ENCODE measurements at regions of chr1 and their contacts with region 1.

Region 1: DNA sequence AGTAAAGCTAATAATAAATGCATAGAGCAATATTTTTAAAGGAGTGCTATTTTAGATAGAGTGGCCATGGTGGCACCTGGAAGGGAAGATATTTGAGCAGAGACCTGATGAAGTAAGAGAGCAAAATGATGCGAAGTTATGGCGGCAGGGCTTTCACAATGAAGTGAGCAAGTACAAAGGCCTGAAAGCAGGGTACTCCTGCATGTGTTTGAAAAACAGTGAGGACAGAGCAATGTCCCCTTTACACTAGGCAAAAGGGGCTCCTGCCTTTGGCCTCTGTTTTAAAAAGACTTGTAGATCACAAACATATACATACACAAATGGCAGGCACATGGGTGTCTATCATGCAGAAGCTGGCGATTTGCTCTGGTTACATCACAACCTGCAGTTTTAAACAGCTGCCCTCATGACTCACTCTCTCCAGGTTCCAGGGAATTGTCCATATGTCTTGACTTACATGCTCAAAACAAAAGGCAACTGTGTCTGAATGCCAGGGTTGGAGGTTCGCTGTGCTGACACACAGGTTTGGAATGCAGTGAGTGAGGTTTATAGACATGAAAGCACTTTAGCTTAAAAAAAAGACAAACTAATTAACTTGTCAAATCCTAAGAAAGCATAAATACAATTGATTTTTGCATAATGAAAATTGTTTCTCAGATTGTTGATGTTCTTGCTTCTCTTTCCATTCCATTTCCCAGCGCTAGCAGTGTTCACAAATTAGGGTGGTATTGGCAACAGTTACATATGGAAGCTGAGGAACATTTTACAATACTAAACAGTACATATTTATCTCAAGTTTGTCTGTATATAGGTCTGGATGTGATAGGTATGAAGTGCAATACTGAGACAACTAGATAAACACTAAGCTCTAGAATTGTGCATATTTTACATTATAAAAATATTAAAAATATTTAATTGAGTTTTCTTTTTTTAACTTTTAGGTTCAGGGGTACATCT is 313.9 kb downstream of the BARHL2 start:
- DNase-seq: peak; percentile 98
- ATAC-seq: peak; percentile 96
- H3K4me3 ChIP-seq: peak overlapping the region; percentile 48
- H3K27ac ChIP-seq: peak overlapping the region; percentile 67
- H3K4me1 ChIP-seq: peaks cover 44% of the 10 kb centered on the region
- H3K27me3 ChIP-seq: no peaks in the 10 kb centered on the region
- CTCF ChIP-seq: no peak

Region 2: DNA sequence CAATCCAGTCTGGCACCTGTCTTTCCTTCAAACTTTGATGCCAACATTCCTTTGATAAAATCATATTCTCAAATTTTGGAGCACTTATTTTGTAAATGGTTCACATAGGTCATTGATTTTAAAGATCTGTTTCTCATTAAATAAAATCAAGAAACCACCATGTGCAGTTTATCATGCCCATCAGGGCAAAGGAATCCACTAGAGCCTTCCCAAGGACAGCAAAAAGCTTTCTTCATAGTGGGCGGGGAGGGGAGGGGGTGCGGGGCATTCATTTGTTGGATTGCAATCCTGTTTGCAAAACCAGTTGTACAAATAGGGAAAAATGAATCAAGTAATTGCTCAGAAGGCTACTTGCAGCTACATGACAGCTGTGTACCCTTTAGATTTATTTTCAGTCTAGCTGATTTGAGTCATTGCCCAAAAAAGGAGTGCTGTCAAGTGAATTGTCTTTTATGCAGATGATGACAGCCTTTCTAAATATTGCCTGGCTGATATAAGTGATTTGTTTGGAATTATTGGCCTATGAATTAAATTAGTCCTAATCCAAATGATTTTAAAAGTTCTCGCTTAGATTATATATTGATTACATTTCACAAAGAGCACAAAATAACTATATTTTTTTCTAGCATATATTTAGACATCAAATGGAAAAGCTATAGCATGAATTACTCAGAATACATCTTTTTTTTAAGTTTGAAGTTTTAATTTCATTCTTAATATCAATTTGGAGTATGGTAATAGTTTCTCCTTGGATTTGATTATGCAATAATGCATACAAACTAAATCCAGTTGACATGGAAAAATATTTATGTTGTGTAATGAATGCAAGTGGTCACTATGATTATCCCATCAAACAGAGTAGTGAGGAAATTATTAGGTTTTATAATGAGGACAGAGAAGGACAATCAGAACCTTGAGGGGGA is 855.3 kb before region 1 on chr1:
- CTCF ChIA-PET with region 1: no interaction called
- POLR2A ChIA-PET with region 1: no interaction called
- intact Hi-C with region 1: loop called (anchors 5 kb)
- DNase-seq: peak; percentile 91
- ATAC-seq: peak; percentile 75
- H3K4me3 ChIP-seq: no peak overlapping the region
- H3K27ac ChIP-seq: peak overlapping the region; percentile 60
- H3K4me1 ChIP-seq: peaks cover 40% of the 10 kb centered on the region
- H3K27me3 ChIP-seq: no peaks in the 10 kb centered on the region
- CTCF ChIP-seq: no peak

Region 3: DNA sequence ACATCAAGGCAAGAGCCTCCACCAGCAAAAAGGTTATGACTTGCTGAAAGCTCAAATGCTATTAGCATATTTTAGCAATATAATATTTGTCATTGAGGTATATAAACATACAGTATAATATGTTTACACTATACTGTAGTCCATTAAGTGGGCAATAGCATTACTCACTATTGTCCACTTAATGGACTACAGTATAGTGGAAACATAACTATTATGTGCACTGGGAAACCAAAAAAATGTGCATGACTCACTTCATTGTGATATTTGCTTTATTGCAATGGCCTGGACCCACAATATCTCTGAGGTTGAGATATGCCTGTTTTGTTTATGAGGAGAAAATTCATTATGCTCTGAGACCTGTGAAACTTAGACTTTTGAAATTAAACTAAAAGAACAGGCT is 14.0 kb after region 1 on chr1:
- CTCF ChIA-PET with region 1: no interaction called
- POLR2A ChIA-PET with region 1: no interaction called
- intact Hi-C with region 1: loop called (anchors 1 kb)
- DNase-seq: peak; percentile 77
- ATAC-seq: peak; percentile 98
- H3K4me3 ChIP-seq: no peak overlapping the region
- H3K27ac ChIP-seq: no peak overlapping the region
- H3K4me1 ChIP-seq: 0 out of 2 replicates have a peak, but pooled peaks cover 4% of the 10 kb centered on the region
- H3K27me3 ChIP-seq: no peaks in the 10 kb centered on the region
- CTCF ChIP-seq: no peak

Region 4: DNA sequence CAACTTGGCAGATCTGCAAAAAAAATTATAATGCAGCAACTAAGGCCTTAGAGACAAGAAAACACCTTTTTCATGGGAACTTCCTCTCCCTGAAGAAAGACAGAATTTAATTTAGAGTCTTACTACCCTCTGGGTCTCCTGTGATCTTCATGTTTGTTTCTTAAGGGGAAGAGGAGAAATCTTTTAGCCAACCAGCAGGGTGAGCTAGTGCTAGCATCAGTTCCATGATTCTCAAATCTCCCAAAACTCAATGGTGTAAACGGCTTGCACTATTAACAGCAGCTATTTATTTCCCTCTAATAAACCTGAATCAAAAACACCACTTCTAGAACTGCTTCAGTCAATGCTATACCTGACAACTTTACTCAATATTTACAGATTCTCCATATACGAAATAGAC is 614.8 kb after region 1 on chr1:
- CTCF ChIA-PET with region 1: no interaction called
- POLR2A ChIA-PET with region 1: no interaction called
- intact Hi-C with region 1: loop called (anchors 5 kb)
- DNase-seq: peak; percentile 38
- ATAC-seq: no peak
- H3K4me3 ChIP-seq: no peak overlapping the region
- H3K27ac ChIP-seq: no peak overlapping the region
- H3K4me1 ChIP-seq: peaks cover 66% of the 10 kb centered on the region
- H3K27me3 ChIP-seq: no peaks in the 10 kb centered on the region
- CTCF ChIP-seq: peak; percentile 59